CD8-positive, alpha-beta memory T cell (primary cell): ENCODE measurements at regions of chr16 and their contacts with region 1.

Region 1: DNA sequence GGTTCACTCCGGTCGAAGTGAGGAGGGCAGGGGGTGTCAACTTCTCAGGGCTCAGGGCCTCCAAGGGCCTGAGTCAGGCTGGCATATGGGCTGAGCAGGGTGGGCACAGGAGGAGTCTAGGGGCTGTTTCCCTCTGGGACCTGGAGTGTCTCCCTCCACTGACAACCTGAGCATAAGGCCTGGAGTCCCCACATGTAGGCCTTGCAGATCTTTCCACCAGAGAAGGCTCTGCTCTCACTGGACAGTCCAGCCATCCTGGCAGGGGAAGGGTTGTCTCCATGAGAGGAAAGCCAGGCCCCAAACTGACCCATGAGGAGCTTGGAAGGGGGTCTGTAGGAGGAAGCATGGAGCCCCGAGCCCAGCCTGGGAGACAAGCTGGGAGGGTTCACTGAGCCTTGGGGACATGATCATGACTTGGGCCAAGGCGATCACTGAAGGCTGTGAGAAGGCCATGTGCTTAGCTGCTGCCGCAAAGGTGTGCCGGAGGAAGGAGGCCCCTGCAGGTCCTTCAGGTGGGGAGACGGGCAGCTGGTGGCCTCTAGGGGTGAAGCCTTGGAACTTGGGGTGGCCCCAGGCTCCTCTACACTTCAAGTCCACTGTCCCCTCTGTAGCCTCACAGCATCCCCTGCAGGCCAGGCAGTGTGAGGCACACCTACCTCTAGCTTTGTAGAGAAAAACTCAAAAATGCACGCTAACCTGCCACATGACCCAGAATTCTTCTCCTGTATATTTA is 9.9 kb downstream of the CMTM2 start:
- DNase-seq: peak; percentile 51 to 86 (median 58)
- H3K4me3 ChIP-seq: no peak overlapping the region
- H3K4me3 Mint-ChIP-seq: peak overlapping the region; percentile 51 to 87 (median 85)
- H3K27ac ChIP-seq: no peak overlapping the region
- H3K27ac Mint-ChIP-seq: peak overlapping the region; percentile 45 to 92 (median 84)
- H3K4me1 ChIP-seq: peaks cover 20% of the 10 kb centered on the region
- H3K4me1 Mint-ChIP-seq: peaks cover 17 to 21% (median 20%) of the 10 kb centered on the region in 3 donors
- H3K27me3 ChIP-seq: no peaks in the 10 kb centered on the region
- H3K27me3 Mint-ChIP-seq: peaks cover 0 to 3% of the 10 kb centered on the region in 2 donors

Region 2: DNA sequence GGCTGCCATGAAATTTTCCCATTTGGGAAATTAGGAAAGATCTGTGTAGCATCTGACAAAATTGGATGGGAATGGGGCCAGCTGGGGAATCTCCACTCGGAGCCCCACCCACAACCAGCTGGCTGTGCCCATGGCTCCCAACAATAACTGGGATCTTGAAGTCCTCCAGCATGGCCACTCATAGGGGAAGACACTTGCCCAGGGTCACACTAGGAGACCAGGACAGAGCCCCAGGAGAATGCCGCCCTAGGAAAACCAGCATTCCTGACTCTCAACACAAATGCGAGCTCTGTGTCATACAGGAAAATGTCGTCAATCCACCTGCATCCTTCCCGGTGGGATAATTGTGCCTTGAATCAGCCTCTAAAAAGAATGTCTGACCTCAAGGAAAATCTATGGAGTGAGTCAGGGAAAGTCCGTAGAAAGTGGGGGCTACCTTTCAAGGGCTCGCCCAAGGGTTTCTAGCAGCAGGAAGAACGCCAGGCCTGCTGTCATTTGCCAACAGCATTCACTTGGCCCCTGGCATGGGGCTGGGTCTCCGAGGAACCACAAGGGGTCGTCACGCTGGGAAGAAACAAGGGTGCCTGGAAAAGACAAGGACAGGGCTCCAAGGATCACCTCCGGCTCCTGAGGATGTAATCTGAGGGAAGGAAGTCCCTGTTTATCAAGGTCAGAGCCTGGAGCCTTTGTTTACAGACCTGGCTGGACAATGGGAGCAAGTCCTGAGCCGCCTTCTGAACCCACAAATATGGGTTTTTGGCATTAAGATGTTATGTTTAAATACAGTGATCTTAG is 206.8 kb before region 1 on chr16:
- CTCF ChIA-PET with region 1: no interaction called
- POLR2A ChIA-PET with region 1: no interaction called
- DNase-seq: no peak
- H3K4me3 ChIP-seq: no peak overlapping the region
- H3K4me3 Mint-ChIP-seq: no peak overlapping the region
- H3K27ac ChIP-seq: no peak overlapping the region
- H3K27ac Mint-ChIP-seq: peak overlapping the region in 1 of 8 donors; percentile 47
- H3K4me1 ChIP-seq: no peaks in the 10 kb centered on the region
- H3K4me1 Mint-ChIP-seq: peaks cover 0 to 8% (median 0%) of the 10 kb centered on the region in 3 donors
- H3K27me3 ChIP-seq: no peaks in the 10 kb centered on the region
- H3K27me3 Mint-ChIP-seq: peaks cover 2 to 15% of the 10 kb centered on the region in 2 donors

Region 3: DNA sequence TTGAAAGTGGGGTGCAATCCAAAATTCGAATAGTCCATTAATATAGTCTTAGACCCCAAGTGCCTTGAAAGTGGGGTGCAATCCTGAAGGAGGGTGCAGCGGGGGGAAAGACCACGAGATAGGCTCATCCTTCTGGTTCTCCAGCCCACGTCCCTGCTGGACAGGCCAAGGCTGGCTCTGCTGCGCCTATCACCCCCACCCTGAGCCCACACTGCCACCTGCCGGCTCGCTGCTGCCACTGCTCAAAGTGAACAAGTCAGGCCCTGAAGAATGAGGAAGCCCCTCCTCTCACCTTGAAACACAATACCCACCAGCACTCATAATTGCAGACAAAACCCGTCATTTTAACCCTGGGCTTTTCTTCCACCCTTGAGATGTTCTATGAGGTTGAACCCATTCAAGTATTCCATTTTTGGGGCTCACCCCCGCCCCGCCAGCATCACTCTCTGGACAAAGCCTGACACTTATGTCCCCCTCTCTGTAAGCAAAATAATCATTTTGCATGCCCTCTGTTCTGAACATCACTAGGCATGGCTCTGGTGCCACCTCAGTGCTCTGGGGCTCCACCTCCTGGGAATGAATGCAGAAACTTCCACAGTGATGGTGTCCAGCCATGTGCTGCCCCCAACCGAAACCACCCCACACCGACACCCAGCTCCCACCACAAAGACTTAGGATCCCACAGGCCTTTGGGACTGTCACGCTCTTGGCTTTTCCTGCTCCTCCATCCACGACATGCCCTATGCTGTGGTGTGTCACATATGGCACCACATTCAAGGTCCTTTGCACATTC is 105.3 kb before region 1 on chr16:
- CTCF ChIA-PET with region 1: interaction called, 62 read pairs
- POLR2A ChIA-PET with region 1: interaction called, 3 read pairs
- DNase-seq: peak; percentile 60 to 81 (median 65)
- H3K4me3 ChIP-seq: no peak overlapping the region
- H3K4me3 Mint-ChIP-seq: no peak overlapping the region
- H3K27ac ChIP-seq: no peak overlapping the region
- H3K27ac Mint-ChIP-seq: peak overlapping the region in 6 of 8 donors; percentile 8 to 95 (median 52)
- H3K4me1 ChIP-seq: peaks cover 10% of the 10 kb centered on the region
- H3K4me1 Mint-ChIP-seq: peaks cover 11 to 23% (median 14%) of the 10 kb centered on the region in 3 donors
- H3K27me3 ChIP-seq: no peaks in the 10 kb centered on the region
- H3K27me3 Mint-ChIP-seq: no peaks in the 10 kb centered on the region

Region 4: DNA sequence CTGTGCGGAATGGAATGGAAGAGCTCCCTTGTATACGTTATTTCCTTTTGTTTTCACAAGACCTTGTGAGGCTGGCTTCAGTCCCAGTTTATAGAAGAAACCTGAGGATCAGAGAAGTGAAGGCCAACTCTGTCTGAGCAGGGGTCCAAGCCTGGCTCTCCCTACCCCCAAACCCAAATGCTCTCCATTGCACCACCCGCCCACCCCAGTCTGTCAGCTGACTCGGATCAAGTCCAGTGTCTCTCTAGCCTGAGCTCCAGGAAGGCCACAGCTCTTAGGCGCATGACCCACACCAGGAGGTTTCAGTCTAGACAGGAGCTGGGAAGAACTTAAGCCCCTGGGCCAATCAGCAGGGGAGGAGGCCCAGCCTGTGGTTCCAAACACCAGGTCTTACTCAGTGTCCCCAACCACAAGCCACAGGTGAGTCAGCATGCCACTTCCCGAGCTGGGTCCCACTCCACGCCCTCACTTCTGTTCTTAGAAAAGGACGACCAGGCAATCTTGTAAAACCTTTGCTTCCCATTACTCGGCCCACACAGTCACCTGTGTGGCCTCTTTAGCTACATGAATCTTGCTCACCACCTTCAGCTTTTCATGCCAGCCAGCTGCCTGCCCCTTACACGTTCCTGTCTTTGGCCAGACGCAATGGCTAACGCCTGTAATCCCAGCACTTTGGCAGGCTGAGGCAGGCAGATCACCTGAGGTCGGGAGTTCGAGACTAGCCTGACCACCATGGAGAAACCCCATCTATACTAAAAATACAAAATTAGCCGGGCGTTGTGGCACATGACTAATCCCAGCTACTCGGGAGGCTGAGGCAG is 67.0 kb before region 1 on chr16:
- CTCF ChIA-PET with region 1: interaction called, 15 read pairs
- POLR2A ChIA-PET with region 1: interaction called, 8 read pairs
- DNase-seq: peak; percentile 43 to 94 (median 69)
- H3K4me3 ChIP-seq: peak overlapping the region; percentile 41
- H3K4me3 Mint-ChIP-seq: peak overlapping the region; percentile 73 to 89 (median 82)
- H3K27ac ChIP-seq: peak overlapping the region; percentile 59
- H3K27ac Mint-ChIP-seq: peak overlapping the region; percentile 95 to 100 (median 96)
- H3K4me1 ChIP-seq: peaks cover 78% of the 10 kb centered on the region
- H3K4me1 Mint-ChIP-seq: peaks cover 84 to 93% (median 86%) of the 10 kb centered on the region in 3 donors
- H3K27me3 ChIP-seq: no peaks in the 10 kb centered on the region
- H3K27me3 Mint-ChIP-seq: no peaks in the 10 kb centered on the region

Region 5: GRCh38 chr16:66562407-66562806 is 26.7 kb before region 1 on chr16:
- CTCF ChIA-PET with region 1: interaction called, 33 read pairs
- POLR2A ChIA-PET with region 1: interaction called, 4 read pairs
- DNase-seq: peak in 2 of 5 donors; percentile 16 to 27
- H3K4me3 ChIP-seq: no peak overlapping the region
- H3K4me3 Mint-ChIP-seq: peak overlapping the region; percentile 3 to 71 (median 48)
- H3K27ac ChIP-seq: no peak overlapping the region
- H3K27ac Mint-ChIP-seq: peak overlapping the region; percentile 13 to 91 (median 74)
- H3K4me1 ChIP-seq: peaks cover 38% of the 10 kb centered on the region
- H3K4me1 Mint-ChIP-seq: peaks cover 70 to 79% (median 78%) of the 10 kb centered on the region in 3 donors
- H3K27me3 ChIP-seq: no peaks in the 10 kb centered on the region
- H3K27me3 Mint-ChIP-seq: no peaks in the 10 kb centered on the region